Activated CD4-positive, alpha-beta T cell treated with anti-CD3 and anti-CD28 coated beads, Interleukin-2, amount 10 ng/mL, durations not matched to agents 7 days and 5 days (primary cell): ENCODE measurements at regions of chr3 and their contacts with region 1.

Region 1: GRCh38 chr3:48435774-48436476 is 4.0 kb downstream of the CCDC51 start:
- DNase-seq: peak; percentile 90
- H3K4me3 Mint-ChIP-seq: no peak overlapping the region
- H3K27ac Mint-ChIP-seq: no peak overlapping the region
- H3K4me1 Mint-ChIP-seq: peaks cover 31% of the 10 kb centered on the region
- H3K27me3 Mint-ChIP-seq: no peaks in the 10 kb centered on the region

Region 2: GRCh38 chr3:48157950-48158376 is 278.0 kb before region 1 on chr3:
- CTCF ChIA-PET with region 1: no interaction called
- POLR2A ChIA-PET with region 1: no interaction called
- DNase-seq: peak; percentile 62
- H3K4me3 Mint-ChIP-seq: no peak overlapping the region
- H3K27ac Mint-ChIP-seq: no peak overlapping the region
- H3K4me1 Mint-ChIP-seq: no peaks in the 10 kb centered on the region
- H3K27me3 Mint-ChIP-seq: no peaks in the 10 kb centered on the region

Region 3: DNA sequence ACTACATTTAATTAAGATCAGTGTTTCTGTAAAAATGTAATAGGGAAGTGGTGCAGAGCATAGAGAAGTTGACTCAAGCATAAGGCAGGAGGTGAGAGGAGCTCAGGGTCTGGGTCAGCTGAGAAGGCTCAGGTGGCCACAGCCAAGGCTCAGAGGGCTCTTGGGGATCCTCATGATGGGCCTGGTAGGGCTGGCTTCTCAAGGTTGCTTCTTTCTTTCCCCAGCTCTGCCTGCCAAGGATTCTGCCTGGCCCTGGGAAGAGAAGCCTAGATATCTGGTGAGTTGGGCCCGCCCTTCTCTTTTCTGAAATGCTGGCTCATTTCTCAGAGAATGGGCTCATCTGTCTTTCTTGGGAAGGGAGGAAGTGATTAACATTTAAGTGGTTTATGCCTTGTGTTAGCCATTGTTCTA is 188.5 kb before region 1 on chr3:
- CTCF ChIA-PET with region 1: interaction called, 10 read pairs
- POLR2A ChIA-PET with region 1: no interaction called
- DNase-seq: no peak
- H3K4me3 Mint-ChIP-seq: peak overlapping the region; percentile 25
- H3K27ac Mint-ChIP-seq: peak overlapping the region; percentile 79
- H3K4me1 Mint-ChIP-seq: peaks cover 44% of the 10 kb centered on the region
- H3K27me3 Mint-ChIP-seq: no peaks in the 10 kb centered on the region

Region 4: DNA sequence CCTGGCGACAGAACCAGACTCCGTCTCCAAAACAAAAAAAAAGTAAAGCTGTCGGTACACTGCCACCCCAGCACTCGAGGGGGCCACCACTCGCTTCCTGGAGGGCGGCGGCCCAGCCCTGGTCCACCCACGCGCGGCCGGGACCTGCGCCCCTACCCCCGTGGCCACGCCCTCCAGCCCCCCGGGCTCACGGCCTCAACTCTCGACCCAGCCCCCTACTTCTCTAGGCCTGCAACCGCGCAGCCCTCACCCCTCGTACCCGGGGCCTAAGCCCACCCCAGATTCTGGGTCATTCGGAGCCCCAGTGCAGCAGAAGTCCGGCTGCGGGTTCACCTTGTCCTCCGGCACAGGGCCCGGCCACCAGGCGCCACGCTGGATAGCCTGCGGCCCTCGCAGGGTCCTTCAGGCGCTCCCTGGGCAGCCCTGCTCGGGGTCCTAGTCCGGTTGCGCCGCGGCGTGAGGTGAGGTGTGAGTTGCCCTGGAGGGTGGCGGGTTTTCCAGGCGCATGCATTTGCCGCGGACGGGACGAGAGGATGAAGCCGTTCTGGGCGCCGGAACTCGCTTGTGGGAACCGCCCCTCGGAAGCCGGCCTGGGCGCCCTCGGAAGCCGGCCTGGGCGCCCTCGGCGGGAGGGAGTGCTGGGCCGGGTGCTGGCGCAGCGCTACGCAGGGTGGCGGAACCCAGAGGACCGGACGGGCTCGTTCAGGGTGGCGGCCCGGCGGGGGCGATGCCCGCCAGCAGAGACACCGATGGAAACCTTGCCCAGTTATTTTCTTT is 134.7 kb before region 1 on chr3:
- CTCF ChIA-PET with region 1: interaction called, 11 read pairs
- POLR2A ChIA-PET with region 1: no interaction called
- DNase-seq: peak; percentile 93
- H3K4me3 Mint-ChIP-seq: peak within 1 kb of the TSS; percentile 86
- H3K27ac Mint-ChIP-seq: peak within 1 kb of the TSS; percentile 96
- H3K4me1 Mint-ChIP-seq: peaks cover 36% of the 10 kb centered on the region
- H3K27me3 Mint-ChIP-seq: peaks cover 13% of the 10 kb centered on the region

Region 5: DNA sequence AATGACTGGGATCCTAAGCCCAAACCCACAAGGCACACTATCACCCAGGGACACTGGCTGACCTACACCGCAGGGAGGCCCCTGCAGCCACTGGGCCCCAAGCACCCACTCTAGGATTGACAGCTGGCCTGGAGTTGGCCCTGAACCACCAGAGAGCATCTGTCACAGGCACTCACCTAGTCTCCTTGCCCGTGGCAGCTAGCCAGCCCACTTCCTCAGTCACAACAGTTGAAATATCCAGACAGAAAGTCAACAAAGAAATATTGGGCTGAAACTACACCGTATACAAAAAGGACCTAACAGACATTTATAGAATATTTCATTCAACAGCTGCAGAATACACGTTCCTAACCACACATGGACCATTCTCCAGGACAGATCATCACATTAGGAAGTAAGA is 97.3 kb before region 1 on chr3:
- CTCF ChIA-PET with region 1: no interaction called
- POLR2A ChIA-PET with region 1: no interaction called
- DNase-seq: no peak
- H3K4me3 Mint-ChIP-seq: no peak overlapping the region
- H3K27ac Mint-ChIP-seq: no peak overlapping the region
- H3K4me1 Mint-ChIP-seq: no peaks in the 10 kb centered on the region
- H3K27me3 Mint-ChIP-seq: peaks cover 8% of the 10 kb centered on the region

Region 6: GRCh38 chr3:48415554-48415953 is 20.4 kb before region 1 on chr3:
- CTCF ChIA-PET with region 1: interaction called, 18 read pairs
- POLR2A ChIA-PET with region 1: no interaction called
- DNase-seq: no peak
- H3K4me3 Mint-ChIP-seq: no peak overlapping the region
- H3K27ac Mint-ChIP-seq: no peak overlapping the region
- H3K4me1 Mint-ChIP-seq: no peaks in the 10 kb centered on the region
- H3K27me3 Mint-ChIP-seq: no peaks in the 10 kb centered on the region

Region 7: GRCh38 chr3:48446425-48447193 is 10.7 kb after region 1 on chr3 and contains the start of gene ATRIP:
- CTCF ChIA-PET with region 1: interaction called, 76 read pairs
- POLR2A ChIA-PET with region 1: interaction called, 4 read pairs
- DNase-seq: peak; percentile 87
- H3K4me3 Mint-ChIP-seq: peak within 1 kb of the TSS; percentile 87
- H3K27ac Mint-ChIP-seq: peak within 1 kb of the TSS; percentile 91
- H3K4me1 Mint-ChIP-seq: peaks cover 54% of the 10 kb centered on the region
- H3K27me3 Mint-ChIP-seq: no peaks in the 10 kb centered on the region
- total RNA-seq, gene ATRIP: 17.4 to 19.4 TPM

Region 8: DNA sequence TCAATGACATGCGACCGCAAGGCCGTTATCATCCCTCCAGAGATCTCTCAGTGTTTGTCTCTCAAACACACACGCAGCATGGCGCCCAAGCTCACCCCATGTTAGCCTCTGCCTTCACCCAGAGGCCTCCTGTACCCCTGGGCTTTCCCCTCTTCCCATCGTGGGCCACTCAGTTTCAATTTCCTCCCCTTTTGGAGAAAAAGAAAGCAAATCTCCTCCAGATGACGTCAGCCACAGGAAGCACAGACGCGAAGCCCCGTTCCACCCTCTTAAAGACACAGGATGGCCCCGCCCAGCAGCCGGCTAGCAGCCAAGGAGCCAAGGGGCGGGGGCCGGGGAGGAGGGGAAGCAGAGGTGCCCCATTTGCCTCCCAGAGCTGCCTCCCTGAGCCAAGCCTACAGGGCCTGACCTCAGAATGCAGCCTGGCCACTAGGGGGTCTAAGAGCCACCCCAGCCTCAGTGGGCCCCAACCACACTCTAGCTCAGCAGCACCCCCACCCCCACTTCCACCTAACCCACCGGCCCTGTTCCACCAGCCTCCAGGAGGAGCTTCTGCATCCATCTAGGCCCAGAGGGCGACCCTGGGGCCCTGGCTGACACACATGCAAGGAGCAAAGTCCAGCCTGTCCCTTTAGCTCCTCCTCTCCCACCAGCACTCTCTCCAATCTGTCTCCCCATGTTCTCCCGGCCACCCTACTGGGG is 37.1 kb after region 1 on chr3:
- CTCF ChIA-PET with region 1: interaction called, 34 read pairs
- POLR2A ChIA-PET with region 1: interaction called, 4 read pairs
- DNase-seq: peak; percentile 98
- H3K4me3 Mint-ChIP-seq: peak overlapping the region; percentile 84
- H3K27ac Mint-ChIP-seq: peak overlapping the region; percentile 98
- H3K4me1 Mint-ChIP-seq: peaks cover 73% of the 10 kb centered on the region
- H3K27me3 Mint-ChIP-seq: no peaks in the 10 kb centered on the region

Region 9: GRCh38 chr3:48556793-48557626 is 121.1 kb after region 1 on chr3 and contains the start of gene PFKFB4:
- CTCF ChIA-PET with region 1: interaction called, 28 read pairs
- POLR2A ChIA-PET with region 1: interaction called, 9 read pairs
- DNase-seq: peak; percentile 100
- H3K4me3 Mint-ChIP-seq: peak within 1 kb of the TSS; percentile 78
- H3K27ac Mint-ChIP-seq: peak within 1 kb of the TSS; percentile 88
- H3K4me1 Mint-ChIP-seq: peaks cover 64% of the 10 kb centered on the region
- H3K27me3 Mint-ChIP-seq: no peaks in the 10 kb centered on the region
- total RNA-seq, gene PFKFB4: 21.6 to 24.9 TPM